AG04450 (cell line): ENCODE measurements at regions of chr17 and their contacts with region 1.

Region 1: DNA sequence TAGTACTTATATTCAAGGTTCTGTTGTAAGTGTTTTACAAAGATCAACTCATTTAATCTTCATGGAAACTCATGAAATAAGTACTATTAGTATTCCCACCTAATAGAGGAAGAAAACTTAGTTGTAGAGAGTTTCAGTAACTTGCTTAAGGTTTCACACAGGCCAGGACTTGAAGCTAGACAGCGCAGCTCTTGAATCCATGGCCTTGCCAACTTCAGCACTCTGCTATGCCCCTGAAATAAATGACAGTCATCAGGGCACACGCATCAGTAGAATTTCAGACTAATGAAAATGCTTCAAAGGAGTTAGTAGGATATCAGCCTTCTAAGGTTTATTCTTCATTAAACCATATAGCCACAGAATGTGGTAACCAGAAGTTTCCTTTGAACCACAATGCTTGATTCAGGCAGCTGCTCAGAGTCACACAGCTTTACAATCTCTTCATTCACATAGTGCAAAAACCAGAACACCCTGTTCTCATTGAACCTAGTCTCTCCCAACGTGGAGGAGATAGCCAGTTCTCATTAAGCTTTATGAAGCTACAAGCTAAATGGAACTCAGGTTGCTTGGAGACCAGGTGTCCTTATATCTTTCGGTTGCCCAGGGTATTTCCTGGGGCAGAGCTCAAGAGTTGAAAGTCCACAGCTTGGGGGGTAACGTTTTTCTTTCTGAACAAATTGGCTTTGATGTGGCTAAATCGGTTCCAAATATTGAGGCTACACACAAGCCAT is 39.7 kb downstream of the KCNJ2 start:
- DNase-seq: no peak
- H3K4me3 ChIP-seq: no peak overlapping the region
- H3K27ac ChIP-seq: no peak overlapping the region
- H3K27me3 ChIP-seq: no peaks in the 10 kb centered on the region
- CTCF ChIP-seq: no peak

Region 2: GRCh38 chr17:70230850-70231640 is 22.1 kb after region 1 on chr17:
- CTCF ChIA-PET with region 1: no interaction called
- POLR2A ChIA-PET with region 1: no interaction called
- DNase-seq: no peak
- H3K4me3 ChIP-seq: no peak overlapping the region
- H3K27ac ChIP-seq: no peak overlapping the region
- H3K27me3 ChIP-seq: no peaks in the 10 kb centered on the region
- CTCF ChIP-seq: no peak

Region 3: DNA sequence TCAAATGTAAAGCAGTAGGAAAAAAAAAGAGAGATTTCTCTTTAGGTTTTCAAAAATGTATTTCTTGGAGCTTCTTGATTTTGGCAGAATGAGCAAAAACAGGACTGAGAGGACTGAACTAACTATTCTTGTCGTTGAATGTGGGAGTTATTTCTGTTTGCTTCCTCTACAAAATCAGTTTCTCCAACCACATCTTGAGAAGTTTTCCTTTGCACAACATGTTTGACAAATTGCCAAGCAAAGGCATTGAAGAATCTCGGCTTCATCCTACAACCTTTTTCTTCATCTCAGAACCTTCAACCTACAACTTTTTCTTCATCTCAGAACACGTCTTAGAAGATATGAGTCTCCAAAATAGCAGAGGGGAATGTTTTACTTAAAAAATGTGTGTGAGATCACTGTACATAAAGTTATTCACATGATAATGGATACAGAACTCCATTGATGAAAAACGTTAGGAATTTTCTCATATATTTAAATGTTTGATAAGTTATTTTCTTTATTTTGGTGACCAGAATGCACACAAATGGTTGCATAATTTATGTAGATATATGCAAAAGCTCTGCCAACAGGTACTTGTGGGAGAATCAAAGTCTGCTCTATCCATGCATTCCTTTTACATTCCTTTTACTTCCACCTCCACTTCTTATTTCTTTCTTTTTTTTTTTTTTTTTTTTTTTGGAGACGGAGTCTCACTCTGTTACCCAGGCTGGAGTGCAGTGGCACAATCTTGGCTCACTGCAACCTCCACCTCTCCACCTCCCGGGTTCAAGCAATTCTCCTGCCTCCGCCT is 330.3 kb after region 1 on chr17:
- CTCF ChIA-PET with region 1: interaction called, 12 read pairs
- POLR2A ChIA-PET with region 1: no interaction called
- DNase-seq: no peak
- H3K4me3 ChIP-seq: no peak overlapping the region
- H3K27ac ChIP-seq: no peak overlapping the region
- H3K27me3 ChIP-seq: no peaks in the 10 kb centered on the region
- CTCF ChIP-seq: no peak